Panc1 (cell line): ENCODE measurements at regions of chr15 and their contacts with region 1.

Region 1: GRCh38 chr15:35078221-35078915 is 6.7 kb downstream of the NANOGP8 start:
- DNase-seq: peak; percentile 47
- ATAC-seq: peak; percentile 77
- H3K4me3 ChIP-seq: no peak overlapping the region
- H3K27ac ChIP-seq: no peak overlapping the region
- H3K4me1 ChIP-seq: no peaks in the 10 kb centered on the region
- H3K27me3 ChIP-seq: no peaks in the 10 kb centered on the region
- CTCF ChIP-seq: peak; percentile 88

Region 2: DNA sequence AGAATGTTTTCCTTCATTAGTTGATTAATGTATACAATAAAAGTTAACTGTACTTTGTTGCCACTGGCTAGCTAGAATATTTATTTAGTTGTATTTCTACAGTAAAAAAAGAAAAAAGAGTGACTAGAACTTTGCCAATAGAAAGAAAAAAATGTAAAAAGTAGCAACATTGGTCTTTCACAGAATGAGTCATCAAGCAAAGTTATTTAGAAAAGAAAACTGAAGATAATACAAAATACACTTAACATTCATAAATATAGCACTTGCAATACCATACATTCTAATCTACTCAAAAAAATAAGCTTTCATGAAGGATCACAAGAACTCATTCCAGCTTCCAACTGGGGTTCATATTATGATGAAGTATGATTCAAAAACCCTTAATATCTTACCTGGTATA is 192.2 kb before region 1 on chr15:
- CTCF ChIA-PET with region 1: no interaction called
- POLR2A ChIA-PET with region 1: no interaction called
- in situ Hi-C with region 1: no loop called
- intact Hi-C with region 1: no loop called
- DNase-seq: no peak
- ATAC-seq: no peak
- H3K4me3 ChIP-seq: no peak overlapping the region
- H3K27ac ChIP-seq: no peak overlapping the region
- H3K4me1 ChIP-seq: no peaks in the 10 kb centered on the region
- H3K27me3 ChIP-seq: no peaks in the 10 kb centered on the region
- CTCF ChIP-seq: no peak

Region 3: GRCh38 chr15:35067496-35068347 is 10.6 kb before region 1 on chr15:
- CTCF ChIA-PET with region 1: no interaction called
- POLR2A ChIA-PET with region 1: no interaction called
- in situ Hi-C with region 1: no loop called
- intact Hi-C with region 1: no loop called
- DNase-seq: no peak
- ATAC-seq: no peak
- H3K4me3 ChIP-seq: no peak overlapping the region
- H3K27ac ChIP-seq: no peak overlapping the region
- H3K4me1 ChIP-seq: no peaks in the 10 kb centered on the region
- H3K27me3 ChIP-seq: no peaks in the 10 kb centered on the region
- CTCF ChIP-seq: no peak

Region 4: DNA sequence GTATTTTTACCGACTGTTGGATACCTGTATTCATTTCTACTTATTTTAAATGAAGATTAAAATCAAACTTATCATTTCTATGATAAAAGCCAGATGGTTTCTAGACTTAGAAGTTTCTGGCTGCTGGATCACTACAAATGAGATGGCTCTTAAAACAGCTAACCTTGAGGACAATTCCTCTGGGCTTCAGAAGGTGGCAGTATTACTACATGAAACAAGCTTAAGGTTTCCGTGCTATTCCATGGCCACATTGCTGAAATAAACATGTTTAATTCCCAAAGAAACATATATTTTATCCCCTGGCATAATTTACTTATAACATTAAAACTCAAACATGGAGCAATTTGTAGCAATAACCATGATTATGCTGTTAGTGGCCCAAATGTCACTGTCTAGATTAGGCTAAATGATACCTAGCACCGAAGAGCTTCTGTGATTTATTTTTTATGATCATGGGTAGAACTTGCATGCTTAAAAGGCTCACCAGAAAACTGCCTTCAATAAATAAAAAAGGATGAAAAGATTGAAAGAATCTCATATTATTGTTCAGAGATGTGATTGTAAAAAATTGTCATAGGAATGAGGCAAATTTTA is 210.8 kb after region 1 on chr15:
- CTCF ChIA-PET with region 1: no interaction called
- POLR2A ChIA-PET with region 1: no interaction called
- in situ Hi-C with region 1: no loop called
- intact Hi-C with region 1: loop called (anchors 2 kb)
- DNase-seq: no peak
- ATAC-seq: peak; percentile 85
- H3K4me3 ChIP-seq: no peak overlapping the region
- H3K27ac ChIP-seq: no peak overlapping the region
- H3K4me1 ChIP-seq: no peaks in the 10 kb centered on the region
- H3K27me3 ChIP-seq: no peaks in the 10 kb centered on the region
- CTCF ChIP-seq: peak; percentile 73; the same call in 1 of the 2 replicates

Region 5: GRCh38 chr15:35444557-35445204 is 366.3 kb after region 1 on chr15:
- CTCF ChIA-PET with region 1: interaction called, 6 read pairs
- POLR2A ChIA-PET with region 1: no interaction called
- in situ Hi-C with region 1: no loop called
- intact Hi-C with region 1: loop called (anchors 1 kb)
- DNase-seq: peak; percentile 32
- ATAC-seq: no peak
- H3K4me3 ChIP-seq: no peak overlapping the region
- H3K27ac ChIP-seq: no peak overlapping the region
- H3K4me1 ChIP-seq: no peaks in the 10 kb centered on the region; the same call in 1 of the 2 replicates
- H3K27me3 ChIP-seq: no peaks in the 10 kb centered on the region
- CTCF ChIP-seq: peak; percentile 80; the same call in 1 of the 2 replicates

Region 6: DNA sequence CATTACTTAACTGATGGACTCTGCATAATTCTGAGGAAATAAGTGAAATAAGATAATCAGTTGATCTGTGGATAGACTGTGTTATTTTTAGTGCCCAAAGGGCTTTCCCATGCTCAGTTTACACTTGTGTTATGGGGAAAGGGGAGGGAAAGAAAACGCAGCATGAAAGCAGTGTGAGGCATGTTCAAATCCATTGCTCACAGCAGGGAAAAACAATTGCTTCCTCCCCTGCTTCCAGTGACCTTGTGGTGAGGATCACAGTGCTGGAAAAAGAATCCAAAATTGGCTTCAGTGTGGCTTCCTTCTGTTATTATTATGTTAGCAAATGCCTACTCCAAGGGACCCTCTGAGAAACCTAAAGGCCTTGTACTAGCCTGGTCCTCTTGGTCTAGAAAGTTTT is 1216.0 kb after region 1 on chr15:
- CTCF ChIA-PET with region 1: interaction called, 23 read pairs
- POLR2A ChIA-PET with region 1: no interaction called
- in situ Hi-C with region 1: no loop called
- intact Hi-C with region 1: no loop called
- DNase-seq: no peak
- ATAC-seq: no peak
- H3K4me3 ChIP-seq: no peak overlapping the region
- H3K27ac ChIP-seq: no peak overlapping the region
- H3K4me1 ChIP-seq: no peaks in the 10 kb centered on the region
- H3K27me3 ChIP-seq: no peaks in the 10 kb centered on the region
- CTCF ChIP-seq: no peak